Psoas muscle (tissue), 8 donors: ENCODE measurements at regions of chr1 and their contacts with region 1.

Region 1: GRCh38 chr1:110053557-110054428 is 16.7 kb downstream of the ALX3 start:
- DNase-seq: peak; percentile 77 to 83
- ATAC-seq: peak; percentile 78 to 88 (median 84)
- H3K4me3 ChIP-seq: no peak overlapping the region
- H3K27ac ChIP-seq: no peak overlapping the region
- H3K4me1 ChIP-seq: no peaks in the 10 kb centered on the region
- H3K27me3 ChIP-seq: no peaks in the 10 kb centered on the region
- CTCF ChIP-seq: peak; percentile 98

Region 2: DNA sequence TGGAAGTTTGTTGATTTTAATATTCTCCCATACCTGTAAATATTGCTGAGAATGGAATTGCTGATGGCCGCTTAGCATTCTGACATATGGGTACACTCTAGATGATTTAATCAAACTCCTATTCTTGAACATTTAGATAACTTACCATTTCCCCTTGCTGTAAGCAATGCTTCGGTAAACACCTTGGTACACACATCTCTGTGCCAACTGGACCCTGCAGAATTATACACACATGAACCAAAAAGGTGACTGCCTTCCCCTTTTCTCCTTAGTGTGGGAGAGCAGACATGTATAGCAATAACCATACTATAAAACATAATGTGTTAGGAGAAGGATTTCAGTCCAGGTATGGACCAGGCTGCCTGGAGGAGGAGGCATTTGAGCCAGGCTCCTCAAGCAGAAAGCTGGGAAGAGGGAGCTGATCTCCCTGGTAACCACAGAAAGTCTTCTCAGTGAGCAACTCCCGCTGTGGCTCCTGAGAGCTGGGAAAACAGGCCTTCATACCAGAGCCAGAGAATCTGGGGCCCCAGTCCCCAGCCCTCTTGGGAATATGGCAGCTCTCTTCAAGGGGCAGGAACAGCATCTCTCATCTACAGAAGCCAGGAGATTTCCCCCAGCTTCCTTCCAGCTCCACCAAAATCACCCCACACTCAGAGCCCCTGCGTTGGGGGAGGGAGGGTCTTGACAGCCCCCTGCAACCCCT is 177.0 kb before region 1 on chr1:
- intact Hi-C with region 1: no loop called
- DNase-seq: no peak
- ATAC-seq: peak in 3 of 4 donors; percentile 7 to 38 (median 14)
- H3K4me3 ChIP-seq: no peak overlapping the region
- H3K27ac ChIP-seq: peak overlapping the region; percentile 53
- H3K4me1 ChIP-seq: no peaks in the 10 kb centered on the region
- H3K27me3 ChIP-seq: peaks cover 0 to 7% (median 0%) of the 10 kb centered on the region in 3 donors
- CTCF ChIP-seq: no peak

Region 3: GRCh38 chr1:110106013-110106941 is 52.5 kb after region 1 on chr1:
- intact Hi-C with region 1: loop called (anchors 1 to 5 kb)
- DNase-seq: peak; percentile 64 to 80
- ATAC-seq: peak; percentile 88 to 96 (median 90)
- H3K4me3 ChIP-seq: no peak overlapping the region
- H3K27ac ChIP-seq: no peak overlapping the region
- H3K4me1 ChIP-seq: no peaks in the 10 kb centered on the region
- H3K27me3 ChIP-seq: no peaks in the 10 kb centered on the region
- CTCF ChIP-seq: peak; percentile 90

Region 4: DNA sequence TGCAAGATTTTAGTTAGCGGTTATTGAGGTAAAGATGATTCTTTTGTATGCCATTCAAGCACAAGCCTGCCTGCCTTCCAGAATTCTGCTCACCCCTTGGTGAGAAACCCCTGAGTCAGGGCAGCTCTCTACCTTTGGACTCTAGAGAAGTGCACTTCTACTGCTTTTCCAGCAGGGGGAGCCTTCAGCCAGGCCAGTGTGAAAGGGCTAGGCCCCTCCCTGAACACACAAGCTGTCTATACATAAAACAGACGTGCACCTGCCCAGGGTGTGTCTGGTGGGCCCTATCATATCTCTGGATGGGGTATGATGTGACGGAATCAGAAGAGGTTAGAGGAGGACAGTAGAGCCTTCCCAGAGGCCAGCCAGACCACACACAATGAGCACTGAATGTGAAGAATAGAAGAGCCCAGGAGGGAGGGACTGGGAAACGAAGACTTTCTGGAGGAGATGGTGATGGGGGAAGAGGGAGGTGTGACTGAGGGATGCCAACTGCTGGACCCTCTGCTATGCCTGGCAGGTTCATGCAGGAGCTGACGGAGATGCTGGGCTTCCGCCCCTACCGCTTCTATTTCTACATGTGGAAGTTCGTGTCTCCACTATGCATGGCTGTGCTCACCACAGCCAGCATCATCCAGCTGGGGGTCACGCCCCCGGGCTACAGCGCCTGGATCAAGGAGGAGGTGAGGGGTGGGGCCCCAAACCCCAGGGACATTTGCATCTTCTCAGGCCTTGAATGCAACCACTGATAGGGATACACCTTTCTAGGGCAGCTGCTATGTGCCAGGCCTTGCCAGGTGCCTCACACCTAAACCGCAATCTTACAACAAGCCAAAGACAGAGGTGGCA is 143.3 kb after region 1 on chr1:
- intact Hi-C with region 1: no loop called
- DNase-seq: no peak
- ATAC-seq: peak; percentile 79 to 94 (median 85)
- H3K4me3 ChIP-seq: no peak overlapping the region
- H3K27ac ChIP-seq: no peak overlapping the region
- H3K4me1 ChIP-seq: no peaks in the 10 kb centered on the region
- H3K27me3 ChIP-seq: no peaks in the 10 kb centered on the region
- CTCF ChIP-seq: peak; percentile 87